ENCODE measurements at regions of chr3 and their contacts with region 1.

Region 1: DNA sequence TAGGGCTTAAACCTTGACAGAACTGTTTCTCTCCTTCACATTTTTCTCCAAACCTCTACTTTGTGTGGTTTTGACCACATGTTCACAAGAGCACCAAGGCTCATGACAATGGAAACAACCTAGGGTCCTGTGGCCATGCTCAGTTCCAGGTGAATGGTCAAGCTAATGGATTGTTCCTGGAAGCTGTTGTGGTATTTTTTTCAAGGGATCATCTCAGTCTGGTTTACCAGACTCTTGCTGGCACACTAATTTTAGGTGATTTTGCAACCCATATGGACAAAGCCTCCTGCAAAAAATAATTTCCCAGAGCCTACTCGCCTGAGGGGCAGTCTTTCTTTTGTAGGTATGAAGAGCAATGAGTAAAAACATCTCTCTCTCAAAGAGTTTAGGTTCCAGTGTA is 67.2 kb downstream of the LSAMP start:
- DNase-seq: no peak
- H3K4me3 ChIP-seq: no peak overlapping the region
- H3K27ac ChIP-seq: no peak overlapping the region
- H3K4me1 ChIP-seq: no peaks in the 10 kb centered on the region
- H3K27me3 ChIP-seq: no peaks in the 10 kb centered on the region
- CTCF ChIP-seq: no peak

Region 2: GRCh38 chr3:116281313-116282143 is 96.5 kb before region 1 on chr3:
- CTCF ChIA-PET with region 1: no interaction called
- POLR2A ChIA-PET with region 1: no interaction called
- intact Hi-C with region 1: no loop called
- DNase-seq: no peak
- H3K4me3 ChIP-seq: no peak overlapping the region
- H3K27ac ChIP-seq: no peak overlapping the region
- H3K4me1 ChIP-seq: peaks cover 4% of the 10 kb centered on the region
- H3K27me3 ChIP-seq: no peaks in the 10 kb centered on the region
- CTCF ChIP-seq: no peak

Region 3: GRCh38 chr3:116314476-116314875 is 63.6 kb before region 1 on chr3:
- CTCF ChIA-PET with region 1: no interaction called
- POLR2A ChIA-PET with region 1: interaction called, 12 read pairs
- intact Hi-C with region 1: no loop called
- DNase-seq: no peak
- H3K4me3 ChIP-seq: no peak overlapping the region
- H3K27ac ChIP-seq: no peak overlapping the region
- H3K4me1 ChIP-seq: no peaks in the 10 kb centered on the region
- H3K27me3 ChIP-seq: no peaks in the 10 kb centered on the region
- CTCF ChIP-seq: no peak

Region 4: GRCh38 chr3:116390318-116390717 is 12.2 kb after region 1 on chr3:
- CTCF ChIA-PET with region 1: interaction called, 17 read pairs
- POLR2A ChIA-PET with region 1: no interaction called
- intact Hi-C with region 1: no loop called
- DNase-seq: no peak
- H3K4me3 ChIP-seq: no peak overlapping the region
- H3K27ac ChIP-seq: no peak overlapping the region
- H3K4me1 ChIP-seq: no peaks in the 10 kb centered on the region
- H3K27me3 ChIP-seq: no peaks in the 10 kb centered on the region
- CTCF ChIP-seq: no peak

Region 5: GRCh38 chr3:117003501-117003900 is 625.4 kb after region 1 on chr3:
- CTCF ChIA-PET with region 1: no interaction called
- POLR2A ChIA-PET with region 1: no interaction called
- intact Hi-C with region 1: no loop called
- DNase-seq: no peak
- H3K4me3 ChIP-seq: no peak overlapping the region
- H3K27ac ChIP-seq: no peak overlapping the region
- H3K4me1 ChIP-seq: peaks cover 3% of the 10 kb centered on the region
- H3K27me3 ChIP-seq: no peaks in the 10 kb centered on the region
- CTCF ChIP-seq: no peak